PC-9 (cell line): ENCODE measurements at regions of chr5 and their contacts with region 1.

Region 1: GRCh38 chr5:36728697-36729543 is 122.5 kb downstream of the SLC1A3 start:
- DNase-seq: peak; percentile 25 to 65
- H3K4me3 ChIP-seq: no peak overlapping the region
- H3K27ac ChIP-seq: no peak overlapping the region
- H3K4me1 ChIP-seq: no peaks in the 10 kb centered on the region
- H3K27me3 ChIP-seq: no peaks in the 10 kb centered on the region
- CTCF ChIP-seq: peak; percentile 89

Region 2: GRCh38 chr5:36870399-36871040 is 141.6 kb after region 1 on chr5:
- CTCF ChIA-PET with region 1: interaction called, 26 read pairs
- POLR2A ChIA-PET with region 1: no interaction called
- intact Hi-C with region 1: no loop called
- DNase-seq: peak in 1 of 2 experiments; percentile 71
- H3K4me3 ChIP-seq: no peak overlapping the region
- H3K27ac ChIP-seq: no peak overlapping the region
- H3K4me1 ChIP-seq: peaks cover 25% of the 10 kb centered on the region
- H3K27me3 ChIP-seq: no peaks in the 10 kb centered on the region
- CTCF ChIP-seq: peak; percentile 86

Region 3: DNA sequence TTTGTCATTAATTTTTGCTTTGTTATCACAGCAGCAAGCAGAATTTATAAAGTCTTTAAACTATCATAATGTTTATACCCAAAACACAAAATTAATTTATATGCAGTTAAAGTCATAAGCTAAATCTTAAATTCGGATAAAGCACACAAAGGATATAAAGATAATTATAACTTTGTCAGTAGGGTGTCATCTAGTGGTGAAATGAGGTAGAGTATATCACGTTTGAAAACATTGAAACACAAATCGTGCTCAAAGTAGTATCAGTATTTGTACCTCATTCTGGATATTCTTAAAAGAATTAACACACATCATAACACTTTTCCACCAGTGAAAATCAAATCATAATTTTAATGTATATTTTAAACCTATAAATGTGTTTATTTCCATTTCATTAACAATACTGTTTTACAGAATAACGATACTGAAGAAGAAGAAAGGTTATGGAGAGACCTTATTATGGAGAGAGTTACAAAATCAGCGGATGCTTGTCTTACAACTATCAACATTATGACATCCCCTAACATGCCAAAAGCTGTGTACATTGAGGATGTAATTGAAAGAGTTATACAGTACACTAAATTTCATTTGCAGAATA is 277.1 kb after region 1 on chr5:
- CTCF ChIA-PET with region 1: interaction called, 4 read pairs
- POLR2A ChIA-PET with region 1: no interaction called
- intact Hi-C with region 1: loop called (anchors 1 kb)
- DNase-seq: peak in 1 of 2 experiments; percentile 53
- H3K4me3 ChIP-seq: no peak overlapping the region
- H3K27ac ChIP-seq: no peak overlapping the region
- H3K4me1 ChIP-seq: no peaks in the 10 kb centered on the region
- H3K27me3 ChIP-seq: no peaks in the 10 kb centered on the region
- CTCF ChIP-seq: peak; percentile 77

Region 4: DNA sequence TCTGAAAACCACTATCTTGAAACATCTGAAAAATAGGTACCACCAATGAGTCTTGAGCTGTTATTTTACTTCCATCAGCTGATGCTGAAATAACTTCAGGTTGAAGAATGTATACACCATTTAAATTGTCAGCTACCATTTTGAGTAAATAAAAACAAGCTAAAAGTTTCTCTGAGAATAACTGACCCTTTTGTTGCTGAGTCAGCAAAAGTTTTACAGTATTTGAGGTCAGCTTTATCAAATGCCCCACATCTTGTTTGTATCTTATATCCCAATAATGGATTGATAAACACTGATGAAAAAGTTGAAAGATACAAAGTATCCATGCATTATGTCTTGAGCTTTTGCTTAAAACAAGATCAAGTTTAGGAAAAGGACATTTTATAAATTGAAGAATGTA is 497.5 kb after region 1 on chr5:
- CTCF ChIA-PET with region 1: no interaction called
- POLR2A ChIA-PET with region 1: no interaction called
- intact Hi-C with region 1: no loop called
- DNase-seq: no peak
- H3K4me3 ChIP-seq: no peak overlapping the region
- H3K27ac ChIP-seq: no peak overlapping the region
- H3K4me1 ChIP-seq: no peaks in the 10 kb centered on the region
- H3K27me3 ChIP-seq: no peaks in the 10 kb centered on the region
- CTCF ChIP-seq: no peak